ENCODE measurements at regions of chr10 and their contacts with region 1.

Region 1: GRCh38 chr10:119725828-119726675 is at the start of gene INPP5F:
- DNase-seq: peak; percentile 99 to 100
- ATAC-seq: peak; percentile 98 to 100 (median 99)
- H3K4me3 ChIP-seq: peak within 1 kb of the TSS; percentile 44 to 95 (median 82)
- H3K27ac ChIP-seq: peak within 1 kb of the TSS; percentile 66 to 98 (median 96)
- H3K4me1 ChIP-seq: peaks cover 3 to 37% (median 28%) of the 10 kb centered on the region in 9 donors
- H3K27me3 ChIP-seq: no peaks in the 10 kb centered on the region
- CTCF ChIP-seq: peak in 8 of 9 donors; percentile 25 to 65 (median 41)
- total RNA-seq, gene INPP5F: 4.2 to 13.3 (median 7.5) TPM

Region 2: DNA sequence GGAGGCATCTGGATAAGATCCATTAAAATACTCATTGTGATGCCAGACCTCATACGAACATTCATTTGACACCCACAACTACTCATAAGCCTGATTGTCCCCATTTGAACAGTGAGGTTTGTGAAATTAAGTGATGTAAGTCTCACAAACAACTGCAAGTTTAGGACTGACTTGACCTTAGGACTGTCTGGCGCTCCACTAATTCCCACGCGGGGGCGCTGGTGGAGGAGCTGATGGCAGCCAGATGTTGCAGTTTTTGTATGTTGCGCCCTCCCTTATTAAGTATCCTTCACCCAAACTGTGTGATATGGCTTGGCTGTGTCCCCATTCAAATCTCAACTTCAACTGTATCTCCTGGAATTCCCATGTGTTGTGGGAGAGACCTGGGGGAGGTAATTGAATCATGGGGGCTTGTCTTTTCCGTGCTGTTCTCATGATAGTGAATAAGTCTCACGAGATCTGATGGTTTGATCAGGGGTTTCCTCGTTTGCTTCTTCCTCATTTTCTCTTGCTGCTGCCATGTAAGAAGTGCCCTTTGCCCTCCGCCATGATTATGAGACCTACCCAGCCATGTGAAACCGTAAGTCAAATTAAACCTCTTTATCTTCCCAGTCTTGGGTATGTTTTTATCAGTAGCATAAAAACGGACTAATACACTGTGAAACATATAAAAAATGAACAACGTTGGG is 109.0 kb before region 1 on chr10:
- intact Hi-C with region 1: loop called in 1 of 10 experiments (anchors 10 kb)
- DNase-seq: peak; percentile 21 to 39
- ATAC-seq: peak in 1 of 8 donors; percentile 61
- H3K4me3 ChIP-seq: no peak overlapping the region
- H3K27ac ChIP-seq: no peak overlapping the region
- H3K4me1 ChIP-seq: peaks cover 0 to 37% (median 18%) of the 10 kb centered on the region in 9 donors
- H3K27me3 ChIP-seq: no peaks in the 10 kb centered on the region
- CTCF ChIP-seq: peak in 3 of 9 donors; percentile 25 to 44 (median 26)

Region 3: GRCh38 chr10:119686439-119687191 is 39.4 kb before region 1 on chr10:
- intact Hi-C with region 1: loop called in 6 of 10 experiments (anchors 1 to 5 kb)
- DNase-seq: peak; percentile 78 to 85
- ATAC-seq: peak; percentile 83 to 93 (median 89)
- H3K4me3 ChIP-seq: peak overlapping the region in 7 of 10 donors; percentile 10 to 51 (median 42)
- H3K27ac ChIP-seq: peak overlapping the region in 8 of 10 donors; percentile 3 to 72 (median 49)
- H3K4me1 ChIP-seq: peaks cover 0 to 26% (median 9%) of the 10 kb centered on the region in 9 donors
- H3K27me3 ChIP-seq: no peaks in the 10 kb centered on the region
- CTCF ChIP-seq: peak; percentile 91 to 97 (median 95)

Region 4: GRCh38 chr10:119872860-119873681 is 147.0 kb after region 1 on chr10:
- intact Hi-C with region 1: loop called in 1 of 10 experiments (anchors 5 kb)
- DNase-seq: peak; percentile 90 to 93
- ATAC-seq: peak; percentile 98 to 99 (median 98)
- H3K4me3 ChIP-seq: peak overlapping the region; percentile 54 to 92 (median 79)
- H3K27ac ChIP-seq: peak overlapping the region; percentile 78 to 98 (median 92)
- H3K4me1 ChIP-seq: peaks cover 0 to 43% (median 25%) of the 10 kb centered on the region in 9 donors
- H3K27me3 ChIP-seq: no peaks in the 10 kb centered on the region
- CTCF ChIP-seq: peak in 1 of 9 donors; percentile 12